ENCODE measurements at regions of chr1 and their contacts with region 1.

Region 1: GRCh38 chr1:30707412-30708360 is 15.7 kb downstream of the MATN1 start:
- DNase-seq: peak; percentile 38
- ATAC-seq: peak; percentile 90
- H3K4me3 ChIP-seq: no peak overlapping the region
- H3K27ac ChIP-seq: no peak overlapping the region
- H3K4me1 ChIP-seq: no peaks in the 10 kb centered on the region
- H3K27me3 ChIP-seq: peaks cover 1 to 15% of the 10 kb centered on the region in 2 experiments; a peak in 2 of 5 replicates
- CTCF ChIP-seq: peak; percentile 94
- EP300 ChIP-seq: no peak
- POLR2A ChIP-seq: no peak
- RAD21 ChIP-seq: peak; percentile 96

Region 2: DNA sequence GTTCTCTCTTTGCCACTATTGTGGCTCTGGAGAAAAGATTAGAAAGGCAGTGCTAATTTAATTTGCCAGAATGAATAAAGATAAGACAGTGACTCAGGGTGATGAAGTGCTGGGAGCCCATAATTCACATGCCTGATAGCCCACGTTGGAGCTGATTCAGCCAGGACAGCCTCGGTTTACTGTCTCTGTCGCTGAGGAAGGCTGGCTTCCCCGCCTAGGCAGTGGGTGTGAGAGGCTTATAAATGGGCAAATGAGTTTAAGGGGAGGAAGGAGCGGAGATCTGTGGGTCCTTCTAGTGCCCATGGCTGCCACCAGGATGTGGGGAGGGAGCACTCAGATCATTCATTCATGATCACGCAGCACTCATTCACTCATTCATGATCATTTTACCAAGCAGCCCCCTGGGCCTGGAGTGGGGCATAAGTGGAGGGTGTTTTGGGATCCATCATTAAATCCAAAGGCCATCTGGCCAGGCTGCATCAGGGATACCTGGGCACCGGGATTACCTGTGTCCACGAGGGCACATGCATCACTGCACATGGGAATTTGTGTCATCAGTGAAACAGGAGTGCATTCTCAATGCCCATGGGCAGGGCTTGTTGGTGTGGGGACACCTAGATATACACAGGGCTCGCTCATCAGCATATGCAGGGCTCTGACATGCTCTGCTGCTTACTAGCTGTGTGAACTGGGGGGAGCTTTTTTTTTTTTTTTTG is 299.7 kb before region 1 on chr1:
- CTCF ChIA-PET with region 1: no interaction called
- POLR2A ChIA-PET with region 1: no interaction called
- in situ Hi-C with region 1: loop called (anchors 10 kb)
- intact Hi-C with region 1: no loop called
- DNase-seq: no peak
- ATAC-seq: no peak
- H3K4me3 ChIP-seq: no peak overlapping the region
- H3K27ac ChIP-seq: no peak overlapping the region
- H3K4me1 ChIP-seq: no peaks in the 10 kb centered on the region
- H3K27me3 ChIP-seq: peaks cover 0 to 7% of the 10 kb centered on the region in 2 experiments; a peak in 3 of 5 replicates
- CTCF ChIP-seq: no peak
- EP300 ChIP-seq: no peak
- POLR2A ChIP-seq: no peak
- RAD21 ChIP-seq: no peak

Region 3: DNA sequence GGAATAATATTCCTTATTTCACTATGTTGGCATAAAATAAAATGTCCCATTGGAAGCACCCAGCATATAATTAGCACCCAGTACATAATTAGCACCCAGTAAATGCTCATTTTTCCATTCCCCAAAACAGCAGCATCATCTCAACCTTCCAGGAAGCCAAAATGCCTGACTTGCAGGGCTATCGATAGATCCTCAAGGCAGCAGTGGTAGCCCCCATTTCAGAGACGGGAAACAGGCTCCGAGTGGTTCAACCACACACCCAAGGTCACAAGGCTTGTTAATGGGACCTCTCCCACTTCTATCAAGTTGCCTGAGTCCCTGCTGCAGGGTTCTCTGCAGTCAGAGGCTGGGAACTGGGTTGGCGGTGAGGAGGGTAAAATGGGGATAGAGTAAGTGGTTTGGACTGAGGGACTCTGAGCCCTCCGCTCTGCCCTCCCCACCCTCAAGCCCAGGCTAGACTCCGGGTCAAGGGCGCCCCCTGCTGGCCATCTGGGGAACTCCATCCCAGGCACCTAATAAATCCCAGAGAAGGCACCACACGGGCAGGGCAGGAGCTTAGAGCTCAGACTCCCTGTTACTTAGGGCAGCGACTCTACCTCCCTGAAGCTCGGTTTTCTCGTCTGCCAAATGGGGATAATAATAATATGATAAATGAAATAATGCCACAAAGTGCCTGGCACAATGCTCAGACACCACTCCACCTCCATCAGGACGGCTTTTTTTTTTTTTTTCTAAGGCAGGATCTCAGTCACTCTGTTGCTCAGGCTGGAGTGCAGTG is 71.8 kb after region 1 on chr1:
- CTCF ChIA-PET with region 1: no interaction called
- POLR2A ChIA-PET with region 1: no interaction called
- in situ Hi-C with region 1: no loop called
- intact Hi-C with region 1: no loop called
- DNase-seq: peak; percentile 59
- ATAC-seq: peak; percentile 58
- H3K4me3 ChIP-seq: no peak overlapping the region
- H3K27ac ChIP-seq: no peak overlapping the region
- H3K4me1 ChIP-seq: peaks cover 22% of the 10 kb centered on the region
- H3K27me3 ChIP-seq: peaks cover 0 to 3% of the 10 kb centered on the region in 2 experiments; a peak in 1 of 5 replicates
- CTCF ChIP-seq: peak; percentile 94
- EP300 ChIP-seq: no peak
- POLR2A ChIP-seq: no peak
- RAD21 ChIP-seq: peak; percentile 85

Region 4: DNA sequence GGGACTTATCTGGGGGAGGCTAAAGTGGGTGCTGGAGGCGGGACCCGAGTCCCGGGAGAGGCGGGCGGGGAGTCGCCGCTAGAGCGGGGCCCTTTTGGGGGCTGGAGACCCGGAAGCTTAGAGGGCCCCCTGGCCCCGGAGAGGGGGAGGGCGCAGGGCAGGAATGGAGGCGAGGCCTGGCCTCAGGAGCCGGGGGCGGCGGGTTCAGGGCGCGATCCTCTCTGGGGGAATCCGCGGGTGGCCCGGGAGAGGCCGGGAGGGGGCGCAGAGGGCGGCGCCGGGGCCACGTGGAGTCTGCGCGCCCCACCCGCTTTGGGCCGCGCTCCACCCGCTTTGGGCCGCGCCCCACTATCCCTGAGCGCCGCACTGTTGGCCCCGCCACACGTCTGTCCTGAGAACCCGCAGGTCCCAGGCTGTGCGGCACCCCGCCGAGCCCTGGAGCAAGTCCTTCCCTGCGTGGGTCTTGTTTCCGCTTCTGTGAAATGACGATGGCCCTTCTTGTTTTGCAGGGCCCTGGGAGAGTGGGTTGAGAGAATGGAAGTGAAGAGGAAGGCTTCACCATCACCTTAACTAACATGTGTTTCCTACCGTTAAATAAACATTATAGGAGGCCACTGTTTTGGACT is 447.6 kb after region 1 on chr1:
- CTCF ChIA-PET with region 1: no interaction called
- POLR2A ChIA-PET with region 1: no interaction called
- in situ Hi-C with region 1: no loop called
- intact Hi-C with region 1: no loop called
- DNase-seq: peak; percentile 65
- ATAC-seq: peak; percentile 87
- H3K4me3 ChIP-seq: peak overlapping the region; percentile 67 to 76 (median 75)
- H3K27ac ChIP-seq: peak overlapping the region; percentile 73
- H3K4me1 ChIP-seq: peaks cover 24% of the 10 kb centered on the region
- H3K27me3 ChIP-seq: no peaks in the 10 kb centered on the region
- CTCF ChIP-seq: peak; percentile 54
- EP300 ChIP-seq: no peak
- POLR2A ChIP-seq: peak; percentile 34 to 40; a peak in 2 of 4 replicates
- RAD21 ChIP-seq: peak; percentile 27; the same call in 1 of the 2 replicates

Measured in HepG2 (cell line).